ENCODE measurements at regions of chr7 and their contacts with region 1.

Region 1: DNA sequence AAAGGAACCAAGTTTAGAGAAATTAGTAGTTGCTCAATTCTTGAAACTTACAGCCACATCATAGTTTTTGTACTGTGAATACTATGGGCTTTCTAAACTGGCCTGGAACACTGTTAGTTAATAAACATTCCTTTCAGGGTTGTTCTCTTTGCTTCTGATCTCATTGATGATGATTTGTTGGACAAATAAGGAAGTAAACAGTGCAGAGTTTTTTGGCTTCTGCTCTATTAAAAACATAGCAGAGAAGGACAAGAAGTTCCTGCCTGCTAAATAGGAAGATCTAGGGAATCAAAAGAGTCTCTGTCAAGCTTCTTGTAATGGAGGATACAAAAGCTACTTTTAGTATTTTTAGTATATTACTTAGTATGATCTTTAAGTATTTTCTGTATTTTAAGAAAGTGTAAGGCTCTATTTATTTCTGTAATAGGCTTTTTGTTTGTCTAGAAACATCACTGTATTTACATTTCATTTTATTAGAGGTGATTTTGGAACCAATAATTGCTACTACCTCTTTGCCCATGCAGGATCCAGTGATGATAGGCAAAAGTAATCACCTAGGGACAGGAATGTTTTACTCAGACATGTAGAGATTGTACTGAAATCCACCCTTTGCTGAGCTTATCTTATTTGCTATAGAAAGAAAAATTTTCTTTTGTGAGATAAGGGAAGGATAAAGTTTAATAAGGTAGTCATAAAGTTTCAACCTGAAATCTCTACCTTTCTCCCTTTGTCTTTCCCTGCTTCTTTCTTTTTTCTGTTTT is 73.3 kb downstream of the MKLN1 start:
- DNase-seq: no peak
- ATAC-seq: peak in 1 of 4 donors; percentile 45
- H3K4me3 ChIP-seq: no peak overlapping the region
- H3K27ac ChIP-seq: peak overlapping the region; percentile 27
- H3K4me1 ChIP-seq: peaks cover 5% of the 10 kb centered on the region
- H3K27me3 ChIP-seq: no peaks in the 10 kb centered on the region
- CTCF ChIP-seq: no peak

Region 2: GRCh38 chr7:131336956-131337355 is 64.1 kb before region 1 on chr7:
- intact Hi-C with region 1: loop called in 1 of 2 experiments (anchors 5 kb)
- DNase-seq: no peak
- ATAC-seq: no peak
- H3K4me3 ChIP-seq: no peak overlapping the region
- H3K27ac ChIP-seq: no peak overlapping the region
- H3K4me1 ChIP-seq: peaks cover 47% of the 10 kb centered on the region
- H3K27me3 ChIP-seq: no peaks in the 10 kb centered on the region
- CTCF ChIP-seq: no peak

Region 3: DNA sequence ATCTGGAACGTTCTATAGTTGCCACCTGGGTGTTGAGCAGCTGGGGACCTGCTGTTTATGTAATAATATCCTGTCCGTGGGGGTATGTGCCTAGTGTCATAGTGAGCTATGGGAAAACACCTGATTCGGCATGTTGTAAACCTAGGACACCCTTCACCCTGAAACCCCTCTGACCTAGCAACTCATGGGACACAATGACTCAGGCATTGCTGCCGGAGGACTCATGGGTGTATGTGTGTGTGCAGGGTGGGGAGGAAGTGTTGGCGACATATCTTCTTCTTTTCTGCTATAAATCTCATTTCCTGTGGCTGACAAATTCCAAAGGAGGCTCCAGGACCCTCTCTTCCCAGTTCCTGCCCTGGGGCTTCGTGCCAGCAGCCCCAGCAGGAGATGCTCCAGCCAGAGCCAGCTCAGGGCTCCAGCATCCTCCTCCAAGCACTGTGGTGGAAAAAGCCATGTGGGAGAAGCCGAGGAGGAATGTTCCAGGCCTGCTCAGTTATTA is 232.4 kb after region 1 on chr7:
- intact Hi-C with region 1: no loop called
- DNase-seq: no peak
- ATAC-seq: peak in 2 of 4 donors; percentile 46 to 50
- H3K4me3 ChIP-seq: no peak overlapping the region
- H3K27ac ChIP-seq: no peak overlapping the region
- H3K4me1 ChIP-seq: no peaks in the 10 kb centered on the region
- H3K27me3 ChIP-seq: no peaks in the 10 kb centered on the region
- CTCF ChIP-seq: no peak